PC-9 (cell line): ENCODE measurements at regions of chr10 and their contacts with region 1.

Region 1: GRCh38 chr10:30722956-30723620 is 93.5 kb upstream of the LYZL2 start:
- DNase-seq: no peak
- H3K4me3 ChIP-seq: no peak overlapping the region
- H3K27ac ChIP-seq: no peak overlapping the region
- H3K4me1 ChIP-seq: 0 out of 2 replicates have a peak, but pooled peaks cover 4% of the 10 kb centered on the region
- H3K27me3 ChIP-seq: no peaks in the 10 kb centered on the region
- CTCF ChIP-seq: no peak

Region 2: GRCh38 chr10:30671026-30671616 is 52.0 kb before region 1 on chr10:
- CTCF ChIA-PET with region 1: no interaction called
- POLR2A ChIA-PET with region 1: interaction called, 8 read pairs
- intact Hi-C with region 1: loop called (anchors 2 kb)
- DNase-seq: peak; percentile 33 to 39
- H3K4me3 ChIP-seq: peak overlapping the region; percentile 26; the same call in 1 of the 2 replicates
- H3K27ac ChIP-seq: no peak overlapping the region
- H3K4me1 ChIP-seq: no peaks in the 10 kb centered on the region
- H3K27me3 ChIP-seq: no peaks in the 10 kb centered on the region
- CTCF ChIP-seq: peak; percentile 80

Region 3: GRCh38 chr10:31490858-31491504 is 767.9 kb after region 1 on chr10:
- CTCF ChIA-PET with region 1: no interaction called
- POLR2A ChIA-PET with region 1: no interaction called
- intact Hi-C with region 1: loop called (anchors 2 kb)
- DNase-seq: peak in 1 of 2 experiments; percentile 19
- H3K4me3 ChIP-seq: no peak overlapping the region
- H3K27ac ChIP-seq: no peak overlapping the region
- H3K4me1 ChIP-seq: no peaks in the 10 kb centered on the region
- H3K27me3 ChIP-seq: no peaks in the 10 kb centered on the region
- CTCF ChIP-seq: peak; percentile 68

Region 4: GRCh38 chr10:31808258-31809218 is 1085.5 kb after region 1 on chr10:
- CTCF ChIA-PET with region 1: no interaction called
- POLR2A ChIA-PET with region 1: no interaction called
- intact Hi-C with region 1: loop called (anchors 2 kb)
- DNase-seq: no peak
- H3K4me3 ChIP-seq: no peak overlapping the region
- H3K27ac ChIP-seq: 0 out of 2 replicates have a peak overlapping the region, but pooled peaks have one; percentile 18
- H3K4me1 ChIP-seq: no peaks in the 10 kb centered on the region
- H3K27me3 ChIP-seq: no peaks in the 10 kb centered on the region
- CTCF ChIP-seq: peak; percentile 73